ENCODE measurements at regions of chr9 and their contacts with region 1.

Region 1: DNA sequence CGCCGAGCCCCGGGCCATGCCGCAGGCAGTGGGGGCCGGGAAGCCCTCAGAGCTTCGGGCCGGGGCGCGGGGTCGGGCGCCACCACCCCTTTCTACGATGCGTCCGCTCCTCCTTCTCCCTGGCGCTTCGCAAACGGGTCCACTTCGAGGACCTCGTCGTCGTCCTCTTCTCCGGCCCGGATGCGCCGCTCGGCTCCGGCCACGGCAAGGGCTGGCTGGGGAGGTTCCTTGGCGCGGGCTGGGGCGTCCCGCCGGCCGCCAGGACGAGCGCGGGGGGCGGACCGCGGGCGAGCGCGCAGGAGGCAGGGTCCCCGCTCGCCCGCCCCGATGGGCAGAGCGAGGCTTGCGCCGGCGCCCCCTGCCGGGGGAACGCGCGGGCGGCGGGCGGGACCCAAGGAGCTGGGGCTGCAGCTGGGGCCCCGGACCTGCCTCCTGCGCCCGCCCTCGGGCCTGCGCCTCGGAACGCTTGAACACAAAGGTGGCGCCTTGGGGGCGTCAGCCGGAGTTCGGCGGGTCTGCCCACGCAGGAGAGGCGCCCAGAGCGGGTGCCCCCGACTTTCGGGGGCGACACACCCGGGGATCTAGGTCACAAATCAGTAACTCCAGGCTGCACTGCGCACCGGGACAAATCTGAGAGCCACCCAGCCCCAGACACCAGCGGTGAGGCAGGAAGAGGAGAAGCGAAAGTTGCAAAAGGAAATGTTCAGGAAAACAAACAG is at the start of gene ROR2:
- DNase-seq: peak; percentile 86
- ATAC-seq: peak; percentile 74
- H3K4me3 Mint-ChIP-seq: peak within 1 kb of the TSS; percentile 89
- H3K27ac Mint-ChIP-seq: no peak within 1 kb of the TSS
- H3K4me1 Mint-ChIP-seq: peaks cover 38% of the 10 kb centered on the region
- H3K27me3 Mint-ChIP-seq: peaks cover 45% of the 10 kb centered on the region
- CTCF ChIP-seq: peak; percentile 45
- total RNA-seq, gene ROR2: 15.2 to 19.8 TPM (median 15.9 TPM) in 3 replicates

Region 2: GRCh38 chr9:91775011-91775707 is 174.9 kb before region 1 on chr9:
- CTCF ChIA-PET with region 1: interaction called, 26 read pairs
- POLR2A ChIA-PET with region 1: no interaction called
- DNase-seq: peak; percentile 84
- ATAC-seq: peak; percentile 89
- H3K4me3 Mint-ChIP-seq: no peak overlapping the region
- H3K27ac Mint-ChIP-seq: no peak overlapping the region
- H3K4me1 Mint-ChIP-seq: peaks cover 42% of the 10 kb centered on the region
- H3K27me3 Mint-ChIP-seq: no peaks in the 10 kb centered on the region
- CTCF ChIP-seq: peak; percentile 97

Region 3: GRCh38 chr9:91857291-91858212 is 92.6 kb before region 1 on chr9:
- CTCF ChIA-PET with region 1: interaction called, 12 read pairs
- POLR2A ChIA-PET with region 1: no interaction called
- DNase-seq: peak; percentile 47
- ATAC-seq: peak; percentile 74
- H3K4me3 Mint-ChIP-seq: no peak overlapping the region
- H3K27ac Mint-ChIP-seq: peak overlapping the region; percentile 81
- H3K4me1 Mint-ChIP-seq: peaks cover 52% of the 10 kb centered on the region
- H3K27me3 Mint-ChIP-seq: no peaks in the 10 kb centered on the region
- CTCF ChIP-seq: no peak

Region 4: DNA sequence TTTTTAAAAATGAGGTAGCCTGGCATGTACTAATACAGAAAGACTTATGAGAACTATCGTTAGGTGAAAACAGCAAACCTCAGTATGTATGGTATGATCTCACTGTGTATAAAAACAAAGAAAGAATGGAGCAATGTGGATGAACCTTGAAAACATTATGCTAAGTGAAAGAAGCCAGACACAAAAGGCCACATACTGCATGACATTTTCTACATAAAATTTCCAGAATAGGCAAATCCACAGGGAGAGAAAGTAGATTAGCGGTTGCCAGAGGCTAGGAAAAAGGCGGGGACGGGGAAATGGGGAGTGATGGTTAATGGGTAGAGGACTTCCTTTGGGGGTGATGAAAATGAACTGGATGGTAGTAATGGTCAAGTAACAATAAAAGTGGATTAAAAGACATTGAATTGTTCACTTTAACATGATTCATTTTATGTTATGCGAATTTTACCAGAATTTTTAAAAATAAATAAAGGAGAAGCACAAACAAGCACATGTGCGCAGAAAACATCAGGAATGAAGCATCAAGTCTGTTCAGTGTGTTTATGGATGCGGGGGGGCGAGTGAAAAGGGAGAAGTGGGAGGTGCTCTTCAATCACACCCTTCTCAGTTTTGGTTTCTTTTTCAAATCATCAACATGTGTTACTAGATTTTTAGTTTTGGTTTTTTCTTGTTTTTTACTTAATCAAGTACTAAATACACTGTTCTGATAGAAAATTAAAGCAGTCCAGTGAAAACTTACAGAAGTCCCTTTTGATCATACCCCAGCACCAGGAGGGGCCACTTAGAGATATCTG is 16.4 kb before region 1 on chr9:
- CTCF ChIA-PET with region 1: interaction called, 16 read pairs
- POLR2A ChIA-PET with region 1: no interaction called
- DNase-seq: no peak
- ATAC-seq: no peak
- H3K4me3 Mint-ChIP-seq: no peak overlapping the region
- H3K27ac Mint-ChIP-seq: no peak overlapping the region
- H3K4me1 Mint-ChIP-seq: peaks cover 25% of the 10 kb centered on the region
- H3K27me3 Mint-ChIP-seq: peaks cover 24% of the 10 kb centered on the region
- CTCF ChIP-seq: no peak

Region 5: DNA sequence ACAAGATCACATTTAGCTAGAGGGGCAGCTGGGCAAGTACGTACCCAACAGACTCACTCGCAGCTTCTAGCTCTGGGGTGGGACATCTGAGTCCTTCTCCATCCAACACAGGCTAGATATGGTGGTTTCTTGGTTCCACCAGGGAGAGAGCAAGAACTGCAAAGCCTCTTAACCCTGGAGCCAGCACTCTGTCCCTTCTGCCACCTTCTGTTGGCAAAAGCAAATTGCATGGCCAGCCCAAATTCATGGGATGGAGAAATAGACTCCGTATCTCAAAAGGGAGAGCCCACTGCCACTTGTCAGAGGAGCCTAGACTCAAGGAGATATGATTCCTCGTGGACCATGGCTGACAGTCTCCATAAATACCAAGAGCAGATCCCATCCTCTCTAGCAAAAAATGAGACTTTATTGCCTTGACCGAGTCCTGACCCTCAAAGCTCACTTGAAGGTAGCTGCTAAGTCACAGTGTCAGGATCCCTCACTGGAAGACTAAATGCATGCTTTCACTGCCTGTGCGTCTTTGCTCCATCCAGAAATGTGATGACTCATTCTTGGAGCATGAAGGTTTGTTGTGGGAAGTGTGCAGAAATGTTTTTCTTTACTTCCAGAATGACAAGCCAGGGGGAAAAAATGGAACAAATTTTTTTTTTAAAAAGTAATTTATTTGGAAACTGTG is 28.8 kb after region 1 on chr9:
- CTCF ChIA-PET with region 1: interaction called, 33 read pairs
- POLR2A ChIA-PET with region 1: no interaction called
- DNase-seq: peak; percentile 53
- ATAC-seq: peak; percentile 97
- H3K4me3 Mint-ChIP-seq: no peak overlapping the region
- H3K27ac Mint-ChIP-seq: no peak overlapping the region
- H3K4me1 Mint-ChIP-seq: peaks cover 9% of the 10 kb centered on the region
- H3K27me3 Mint-ChIP-seq: no peaks in the 10 kb centered on the region; the same call in 1 of the 2 replicates
- CTCF ChIP-seq: peak; percentile 23; the same call in 1 of the 2 replicates